ENCODE measurements at regions of chr11 and their contacts with region 1.

Region 1: DNA sequence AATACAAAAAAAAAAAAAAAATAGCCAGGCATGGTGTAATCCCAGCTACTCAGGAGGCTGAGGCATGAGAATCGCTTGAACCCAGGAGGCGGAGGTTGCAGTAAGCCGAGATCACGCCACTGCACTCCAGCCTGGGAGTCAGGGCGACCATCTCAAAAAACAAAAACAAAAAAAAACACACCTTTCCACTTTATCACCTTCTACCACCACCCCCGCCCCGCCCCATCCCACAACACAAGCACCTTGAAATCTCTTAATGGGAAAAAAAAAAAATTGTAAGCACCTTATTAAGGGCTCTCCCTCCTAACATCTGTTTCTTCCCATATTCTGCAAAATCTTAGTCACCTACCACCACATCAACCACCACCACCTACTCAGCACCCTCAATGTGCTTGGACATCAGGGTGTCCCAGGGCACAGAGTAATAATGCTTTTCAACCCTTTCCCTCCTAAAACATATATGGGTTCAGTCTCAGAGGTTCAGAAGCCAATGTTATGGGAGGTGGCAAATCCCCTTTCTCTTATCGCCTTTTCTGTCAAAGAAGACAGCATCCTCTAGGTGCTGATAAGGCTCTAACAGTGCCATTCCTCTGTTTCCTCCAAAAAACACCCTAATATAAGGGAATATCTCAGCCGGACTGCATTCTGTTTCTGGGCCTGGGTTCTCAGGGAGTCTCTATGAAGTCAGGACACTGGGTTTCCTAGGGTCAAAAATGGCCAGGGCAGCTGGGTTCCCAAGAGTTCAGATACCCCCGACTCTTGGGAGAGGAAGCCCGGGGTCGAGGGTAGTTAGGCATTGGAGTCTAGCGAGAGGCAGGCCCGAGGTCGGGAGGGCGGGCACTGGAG is 718 bp downstream of the INTS5 start:
- DNase-seq: no peak
- ATAC-seq: peak; percentile 16
- H3K4me3 ChIP-seq: peak overlapping the region; percentile 88 to 92 (median 89)
- H3K27ac ChIP-seq: peak overlapping the region; percentile 84
- H3K4me1 ChIP-seq: peaks cover 39% of the 10 kb centered on the region
- H3K27me3 ChIP-seq: no peaks in the 10 kb centered on the region
- CTCF ChIP-seq: no peak
- EP300 ChIP-seq: no peak
- POLR2A ChIP-seq: no peak
- RAD21 ChIP-seq: no peak

Region 2: GRCh38 chr11:62612366-62613290 is 39.8 kb before region 1 on chr11 and contains the starts of genes EML3 and ROM1:
- CTCF ChIA-PET with region 1: no interaction called
- POLR2A ChIA-PET with region 1: interaction called, 5 read pairs
- in situ Hi-C with region 1: no loop called
- intact Hi-C with region 1: loop called (anchors 5 kb)
- DNase-seq: peak; percentile 70
- ATAC-seq: peak; percentile 74
- H3K4me3 ChIP-seq: peak within 1 kb of the TSS; percentile 77 to 93 (median 77)
- H3K27ac ChIP-seq: peak within 1 kb of the TSS; percentile 64
- H3K4me1 ChIP-seq: peaks cover 50% of the 10 kb centered on the region
- H3K27me3 ChIP-seq: no peaks in the 10 kb centered on the region; a peak in 1 of 5 replicates
- CTCF ChIP-seq: peak; percentile 74
- EP300 ChIP-seq: no peak
- POLR2A ChIP-seq: peak in 1 of 2 experiments; percentile 19; a peak in 1 of 4 replicates
- RAD21 ChIP-seq: peak; percentile 73
- total RNA-seq, gene EML3: 4.6 and 10.6 TPM in 2 replicates
- total RNA-seq, gene ROM1: 1.8 and 2.4 TPM in 2 replicates

Region 3: GRCh38 chr11:62671575-62672389 is 19.4 kb after region 1 on chr11 and contains the starts of genes LBHD1 and UQCC3:
- CTCF ChIA-PET with region 1: no interaction called
- POLR2A ChIA-PET with region 1: interaction called, 44 read pairs
- in situ Hi-C with region 1: no loop called
- intact Hi-C with region 1: no loop called
- DNase-seq: peak; percentile 79
- ATAC-seq: peak; percentile 83
- H3K4me3 ChIP-seq: peak within 1 kb of the TSS; percentile 76 to 98 (median 91)
- H3K27ac ChIP-seq: peak within 1 kb of the TSS; percentile 90
- H3K4me1 ChIP-seq: peaks cover 59% of the 10 kb centered on the region
- H3K27me3 ChIP-seq: no peaks in the 10 kb centered on the region; a peak in 1 of 5 replicates
- CTCF ChIP-seq: no peak; the same call in none of the 2 replicates
- EP300 ChIP-seq: peak in 1 of 2 experiments; percentile 21; a peak in 1 of 4 replicates
- POLR2A ChIP-seq: peak; percentile 80 to 82
- RAD21 ChIP-seq: no peak
- total RNA-seq, gene LBHD1: 1.4 and 3.7 TPM in 2 replicates
- total RNA-seq, gene UQCC3: 12.1 and 16.0 TPM in 2 replicates

Region 4: DNA sequence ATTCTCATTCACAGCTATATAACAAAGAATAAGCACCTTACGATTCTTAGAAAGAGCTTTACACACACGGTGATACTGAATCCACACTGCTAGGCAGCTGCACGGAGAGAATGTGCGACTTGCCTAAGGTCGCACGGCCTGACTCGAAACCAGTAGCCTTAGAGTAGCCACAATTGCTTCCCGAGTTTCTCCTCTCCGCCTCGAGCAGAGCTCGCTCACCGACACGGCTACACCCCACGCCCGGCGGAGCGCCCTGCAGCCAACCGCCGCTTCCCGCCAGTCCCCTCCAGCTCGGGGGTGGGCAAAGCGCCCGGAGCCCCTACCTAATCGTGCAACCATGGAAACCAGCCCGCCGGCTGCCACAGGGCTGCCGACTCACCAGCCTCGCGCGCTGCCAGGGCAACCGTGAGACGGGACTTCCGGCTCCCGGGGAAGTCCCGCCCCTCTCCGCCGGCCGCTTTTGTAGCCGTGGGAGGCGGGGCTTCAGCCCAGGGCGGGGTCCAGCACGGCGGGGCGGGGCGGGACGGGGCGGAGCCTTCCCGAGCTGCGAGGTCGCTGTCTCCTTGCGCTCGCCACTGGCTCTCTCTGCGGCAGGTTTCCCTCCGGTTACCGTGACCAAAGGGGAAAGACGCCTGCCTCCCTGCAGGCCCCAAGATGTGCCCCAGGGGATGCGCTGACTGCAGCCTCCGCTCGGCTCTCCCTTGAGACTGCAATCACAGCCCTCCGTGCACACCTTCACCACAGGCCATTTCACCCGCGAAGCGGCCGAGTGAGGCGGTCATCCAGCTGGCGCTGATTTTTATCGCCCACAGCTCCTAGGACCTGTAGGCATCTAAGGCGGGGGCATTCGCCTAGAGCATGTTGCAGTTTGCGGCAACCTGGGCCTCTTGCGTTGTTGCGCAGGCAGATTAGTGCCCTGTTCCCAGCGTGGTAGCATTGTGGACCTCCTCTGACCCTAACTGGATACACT is 53.8 kb after region 1 on chr11:
- CTCF ChIA-PET with region 1: no interaction called
- POLR2A ChIA-PET with region 1: interaction called, 11 read pairs
- in situ Hi-C with region 1: no loop called
- intact Hi-C with region 1: no loop called
- DNase-seq: peak; percentile 83
- ATAC-seq: peak; percentile 93
- H3K4me3 ChIP-seq: peak overlapping the region; percentile 70 to 86 (median 80)
- H3K27ac ChIP-seq: peak overlapping the region; percentile 69
- H3K4me1 ChIP-seq: peaks cover 18% of the 10 kb centered on the region
- H3K27me3 ChIP-seq: no peaks in the 10 kb centered on the region
- CTCF ChIP-seq: no peak
- EP300 ChIP-seq: no peak
- POLR2A ChIP-seq: peak in 1 of 2 experiments; percentile 74; a peak in 2 of 4 replicates
- RAD21 ChIP-seq: no peak

Measured in HepG2 (cell line).